ENCODE measurements at regions of chr6 and their contacts with region 1.

Region 1: GRCh38 chr6:129251669-129252376 is 368.9 kb downstream of the LAMA2 start:
- DNase-seq: peak; percentile 57 to 69
- H3K4me3 ChIP-seq: no peak overlapping the region
- H3K27ac ChIP-seq: no peak overlapping the region
- H3K4me1 ChIP-seq: no peaks in the 10 kb centered on the region
- H3K27me3 ChIP-seq: no peaks in the 10 kb centered on the region
- CTCF ChIP-seq: peak; percentile 37 to 77 (median 77)
- EP300 ChIP-seq: no peak
- POLR2A ChIP-seq: no peak
- RAD21 ChIP-seq: peak; percentile 92 to 93

Region 2: DNA sequence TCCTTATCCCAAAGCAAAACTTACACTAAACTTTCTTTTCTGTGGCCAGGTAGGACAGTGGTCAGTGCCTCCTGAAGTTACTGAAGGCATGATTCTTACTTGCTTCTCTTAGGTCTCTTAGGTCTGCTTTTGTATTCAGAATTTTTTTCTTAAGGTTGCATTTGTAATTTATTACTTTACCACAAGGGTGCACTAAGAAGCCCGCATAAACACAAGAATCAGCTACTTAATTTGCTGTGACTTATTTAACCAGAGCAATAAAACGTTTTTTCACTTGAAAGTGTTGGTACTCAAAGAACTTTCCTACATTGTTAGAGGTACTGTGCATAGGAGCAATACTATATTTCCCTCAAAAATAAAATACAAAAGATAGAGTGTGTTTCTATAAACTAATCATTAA is 444.2 kb before region 1 on chr6:
- CTCF ChIA-PET with region 1: interaction called, 11 read pairs
- POLR2A ChIA-PET with region 1: no interaction called
- DNase-seq: no peak
- H3K4me3 ChIP-seq: no peak overlapping the region
- H3K27ac ChIP-seq: no peak overlapping the region
- H3K4me1 ChIP-seq: no peaks in the 10 kb centered on the region
- H3K27me3 ChIP-seq: no peaks in the 10 kb centered on the region
- CTCF ChIP-seq: peak in 2 of 3 experiments; percentile 11 to 19; a peak in 2 of 4 replicates
- EP300 ChIP-seq: no peak
- POLR2A ChIP-seq: no peak
- RAD21 ChIP-seq: peak; percentile 59 to 60

Region 3: DNA sequence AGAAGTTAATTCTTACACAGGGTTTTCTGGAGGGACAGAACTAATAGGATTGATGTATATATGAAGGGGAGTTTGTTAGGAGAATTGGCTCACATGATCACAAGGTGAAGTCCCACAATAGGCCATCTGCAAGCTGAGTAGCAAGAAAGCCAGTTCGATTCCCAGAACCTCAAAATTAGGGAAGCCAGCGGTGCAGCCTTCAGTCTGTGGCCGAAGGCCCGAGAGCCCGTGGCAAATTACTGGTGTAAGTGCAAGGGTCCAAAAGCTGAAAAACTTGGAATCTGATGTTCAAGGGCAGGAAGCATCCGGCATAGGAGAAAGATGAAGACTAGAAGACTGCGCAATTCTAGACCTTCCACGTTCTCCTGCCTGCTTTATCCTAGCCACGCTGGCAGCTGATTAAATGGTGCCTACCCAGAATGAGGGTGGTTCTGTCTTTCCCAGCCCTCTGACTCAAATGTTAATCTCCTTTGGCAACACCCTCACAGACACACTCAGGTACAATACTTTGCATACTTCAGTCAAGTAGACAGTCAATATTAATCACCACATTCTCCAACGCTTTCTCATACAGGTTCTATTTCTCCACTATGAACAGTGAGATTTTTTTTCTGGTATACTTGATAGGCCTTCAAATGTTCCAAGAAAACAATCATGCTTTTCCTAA is 11.9 kb before region 1 on chr6:
- CTCF ChIA-PET with region 1: interaction called, 23 read pairs
- POLR2A ChIA-PET with region 1: no interaction called
- DNase-seq: no peak
- H3K4me3 ChIP-seq: no peak overlapping the region
- H3K27ac ChIP-seq: no peak overlapping the region
- H3K4me1 ChIP-seq: no peaks in the 10 kb centered on the region
- H3K27me3 ChIP-seq: no peaks in the 10 kb centered on the region
- CTCF ChIP-seq: no peak
- EP300 ChIP-seq: no peak
- POLR2A ChIP-seq: no peak
- RAD21 ChIP-seq: no peak

Region 4: GRCh38 chr6:129262661-129263060 is 10.8 kb after region 1 on chr6:
- CTCF ChIA-PET with region 1: interaction called, 27 read pairs
- POLR2A ChIA-PET with region 1: no interaction called
- DNase-seq: no peak
- H3K4me3 ChIP-seq: no peak overlapping the region
- H3K27ac ChIP-seq: no peak overlapping the region
- H3K4me1 ChIP-seq: no peaks in the 10 kb centered on the region
- H3K27me3 ChIP-seq: no peaks in the 10 kb centered on the region
- CTCF ChIP-seq: no peak
- EP300 ChIP-seq: no peak
- POLR2A ChIP-seq: no peak
- RAD21 ChIP-seq: no peak